Dendritic cell treated with granulocyte-macrophage colony-stimulating factor and Interleukin-4, amounts not matched to agents 40 ng/mL and 50 ng/mL, for 4 days (primary cell): ENCODE measurements at regions of chr15 and their contacts with region 1.

Region 1: GRCh38 chr15:101641166-101641764 is 10.9 kb downstream of the TM2D3 start:
- H3K4me3 Mint-ChIP-seq: peak overlapping the region; percentile 47
- H3K27ac Mint-ChIP-seq: peak overlapping the region; percentile 89
- H3K4me1 Mint-ChIP-seq: peaks cover 33% of the 10 kb centered on the region
- H3K27me3 Mint-ChIP-seq: no peaks in the 10 kb centered on the region

Region 2: DNA sequence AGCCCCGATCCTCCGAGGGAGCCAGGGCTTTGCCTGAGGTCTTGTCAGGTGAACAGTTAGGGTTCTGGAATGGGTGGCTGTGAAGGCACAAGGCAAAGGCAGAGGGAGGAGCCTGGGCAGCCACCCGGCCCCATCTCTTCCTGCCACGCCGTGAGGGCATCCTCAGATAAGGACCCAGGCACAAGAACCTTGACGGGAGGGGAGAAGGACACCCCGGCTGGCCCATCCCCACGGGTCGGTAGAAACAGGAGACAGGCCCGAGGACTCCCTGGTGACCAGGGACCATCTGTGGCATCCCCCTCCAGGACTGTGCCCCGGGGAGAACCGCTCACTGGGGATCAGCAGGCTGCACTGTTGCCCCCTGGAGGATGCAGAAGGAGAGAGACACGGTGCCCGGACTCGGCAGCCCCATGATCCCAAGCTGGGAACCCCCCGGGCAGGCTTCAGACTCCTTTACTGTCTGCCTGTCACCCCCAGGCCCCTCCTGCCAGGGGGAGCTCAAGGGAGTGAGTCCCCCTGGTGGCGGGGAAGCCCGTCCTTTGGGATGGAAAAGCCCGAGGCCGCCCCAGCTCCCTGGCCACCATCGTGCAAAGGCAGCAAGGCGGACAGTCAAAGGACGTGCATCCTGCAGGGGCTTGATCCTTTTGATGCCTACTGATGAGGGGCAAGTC is 139.4 kb before region 1 on chr15:
- intact Hi-C with region 1: loop called (anchors 10 kb)
- H3K4me3 Mint-ChIP-seq: no peak overlapping the region
- H3K27ac Mint-ChIP-seq: no peak overlapping the region
- H3K4me1 Mint-ChIP-seq: peaks cover 17% of the 10 kb centered on the region
- H3K27me3 Mint-ChIP-seq: peaks cover 65% of the 10 kb centered on the region

Region 3: GRCh38 chr15:101568309-101568708 is 73.0 kb before region 1 on chr15:
- intact Hi-C with region 1: no loop called
- H3K4me3 Mint-ChIP-seq: no peak overlapping the region
- H3K27ac Mint-ChIP-seq: no peak overlapping the region
- H3K4me1 Mint-ChIP-seq: no peaks in the 10 kb centered on the region
- H3K27me3 Mint-ChIP-seq: peaks cover 15% of the 10 kb centered on the region

Region 4: GRCh38 chr15:101578437-101578894 is 62.8 kb before region 1 on chr15:
- intact Hi-C with region 1: no loop called
- H3K4me3 Mint-ChIP-seq: no peak overlapping the region
- H3K27ac Mint-ChIP-seq: no peak overlapping the region
- H3K4me1 Mint-ChIP-seq: no peaks in the 10 kb centered on the region
- H3K27me3 Mint-ChIP-seq: peaks cover 24% of the 10 kb centered on the region

Region 5: DNA sequence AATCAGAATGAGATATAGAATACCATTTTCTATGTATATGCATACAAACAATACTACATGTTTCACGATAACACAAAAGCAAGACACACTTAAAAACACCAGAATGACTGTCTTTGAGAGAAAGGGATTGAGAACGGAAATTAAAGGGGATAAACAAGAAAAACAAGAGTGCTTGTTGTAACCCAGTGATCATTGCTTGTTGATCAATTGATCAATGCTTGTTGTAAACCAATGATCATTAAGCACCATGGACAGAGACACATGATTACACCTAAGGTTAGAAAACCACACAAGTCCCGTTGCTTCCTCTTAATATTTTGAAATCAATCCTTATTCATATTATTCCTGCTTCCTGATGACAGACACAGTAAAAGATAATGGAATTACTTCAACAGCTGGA is 169.6 kb after region 1 on chr15:
- intact Hi-C with region 1: no loop called
- H3K4me3 Mint-ChIP-seq: no peak overlapping the region
- H3K27ac Mint-ChIP-seq: no peak overlapping the region
- H3K4me1 Mint-ChIP-seq: no peaks in the 10 kb centered on the region
- H3K27me3 Mint-ChIP-seq: no peaks in the 10 kb centered on the region